ENCODE measurements at regions of chr7 and their contacts with region 1.

Region 1: GRCh38 chr7:90262438-90262837 is 17.5 kb downstream of the CFAP69 start:
- DNase-seq: peak; percentile 44
- CTCF ChIP-seq: peak; percentile 42

Region 2: GRCh38 chr7:90244909-90245851 is 17.3 kb before region 1 on chr7 and contains the start of gene CFAP69:
- CTCF ChIA-PET with region 1: interaction called, 16 read pairs
- POLR2A ChIA-PET with region 1: no interaction called
- DNase-seq: peak; percentile 89
- CTCF ChIP-seq: no peak

Region 3: GRCh38 chr7:90250601-90251303 is 11.7 kb before region 1 on chr7:
- CTCF ChIA-PET with region 1: interaction called, 16 read pairs
- POLR2A ChIA-PET with region 1: no interaction called
- DNase-seq: no peak
- CTCF ChIP-seq: no peak